Activated T-helper 1 cell treated with anti-CD3 and anti-CD28 coated beads, Interleukin-12 subunit alpha, Interleukin-12 subunit beta, Interleukin-2, Interleukin-4 antibody, amounts not matched to agents 30 ng/mL and 10 ng/mL and 1 ng/mL, durations not matched to agents 14 hours and 24 hours and 36 hours (primary cell): ENCODE measurements at regions of chr7 and their contacts with region 1.

Region 1: GRCh38 chr7:19051767-19052375 is 65.6 kb downstream of the TWIST1 start:
- DNase-seq: no peak
- H3K4me3 Mint-ChIP-seq: no peak overlapping the region
- H3K27ac Mint-ChIP-seq: no peak overlapping the region
- H3K4me1 Mint-ChIP-seq: no peaks in the 10 kb centered on the region
- H3K27me3 Mint-ChIP-seq: no peaks in the 10 kb centered on the region

Region 2: GRCh38 chr7:18666107-18666728 is 385.7 kb before region 1 on chr7:
- intact Hi-C with region 1: loop called (anchors 10 kb)
- DNase-seq: peak; percentile 46
- H3K4me3 Mint-ChIP-seq: no peak overlapping the region
- H3K27ac Mint-ChIP-seq: no peak overlapping the region
- H3K4me1 Mint-ChIP-seq: peaks cover 7% of the 10 kb centered on the region
- H3K27me3 Mint-ChIP-seq: no peaks in the 10 kb centered on the region

Region 3: DNA sequence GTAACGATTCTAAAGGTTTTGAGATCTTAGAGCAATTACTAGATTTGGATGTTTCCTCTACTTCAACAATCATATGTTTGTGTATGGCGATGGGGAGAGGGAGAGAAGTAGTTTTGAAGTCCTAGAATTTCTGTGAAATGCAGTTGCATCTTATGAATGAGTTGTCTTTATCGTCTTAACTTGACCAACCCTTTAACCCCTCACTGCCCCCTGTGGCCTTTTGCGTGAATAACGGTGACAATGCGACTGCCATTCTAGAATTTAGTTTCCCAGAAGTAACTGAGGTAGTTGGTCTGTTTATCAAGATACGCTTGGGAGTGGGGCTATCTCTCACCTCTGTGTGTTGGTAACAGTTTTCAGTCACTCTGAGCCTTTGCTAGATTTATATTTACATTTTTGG is 351.7 kb before region 1 on chr7:
- intact Hi-C with region 1: loop called (anchors 10 kb)
- DNase-seq: no peak
- H3K4me3 Mint-ChIP-seq: no peak overlapping the region
- H3K27ac Mint-ChIP-seq: no peak overlapping the region
- H3K4me1 Mint-ChIP-seq: no peaks in the 10 kb centered on the region
- H3K27me3 Mint-ChIP-seq: no peaks in the 10 kb centered on the region

Region 4: GRCh38 chr7:18906901-18907300 is 145.0 kb before region 1 on chr7:
- intact Hi-C with region 1: no loop called
- DNase-seq: no peak
- H3K4me3 Mint-ChIP-seq: no peak overlapping the region
- H3K27ac Mint-ChIP-seq: no peak overlapping the region
- H3K4me1 Mint-ChIP-seq: no peaks in the 10 kb centered on the region
- H3K27me3 Mint-ChIP-seq: no peaks in the 10 kb centered on the region